Left cardiac atrium (tissue), 4 donors: ENCODE measurements at regions of chr6 and their contacts with region 1.

Region 1: GRCh38 chr6:112180095-112180820 is 74.1 kb downstream of the LAMA4 start:
- DNase-seq: peak; percentile 34
- ATAC-seq: peak; percentile 57 to 64

Region 2: GRCh38 chr6:112253841-112254816 is 73.9 kb after region 1 on chr6 and contains the start of gene LAMA4:
- intact Hi-C with region 1: loop called in 1 of 2 experiments (anchors 10 kb)
- DNase-seq: peak; percentile 60
- ATAC-seq: peak; percentile 65 to 73
- total RNA-seq, gene LAMA4: 63.7 to 87.8 TPM

Region 3: DNA sequence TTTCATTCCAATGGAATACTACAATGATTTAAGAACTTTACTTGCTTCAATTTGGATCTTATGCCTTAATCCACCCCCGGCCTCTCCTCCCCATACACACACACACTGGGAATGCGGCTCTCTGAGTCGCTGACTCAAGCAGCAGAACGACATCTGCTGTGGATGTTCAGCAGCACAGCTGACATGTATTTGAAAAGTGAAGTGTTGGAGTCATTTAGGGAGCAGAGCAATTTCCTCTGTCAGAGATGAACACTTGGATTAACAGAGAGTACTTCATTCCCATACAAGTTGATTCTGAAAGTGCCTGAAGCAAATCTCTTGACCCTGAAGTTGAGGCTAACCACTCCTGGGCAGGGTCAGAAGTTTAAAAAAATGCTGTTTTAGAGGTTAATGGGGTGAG is 102.0 kb after region 1 on chr6:
- intact Hi-C with region 1: loop called in 1 of 2 experiments (anchors 10 kb)
- DNase-seq: peak; percentile 74
- ATAC-seq: peak; percentile 93

Region 4: GRCh38 chr6:112311950-112312547 is 131.8 kb after region 1 on chr6:
- intact Hi-C with region 1: loop called (anchors 1 to 5 kb)
- DNase-seq: no peak
- ATAC-seq: peak in 1 of 2 donors; percentile 55

Region 5: GRCh38 chr6:112372226-112372806 is 192.1 kb after region 1 on chr6:
- intact Hi-C with region 1: loop called in 1 of 2 experiments (anchors 5 kb)
- DNase-seq: no peak
- ATAC-seq: peak; percentile 63 to 64